Activated naive CD4-positive, alpha-beta T cell treated with anti-CD3 and anti-CD28 coated beads for 36 hours (primary cell): ENCODE measurements at regions of chr11 and their contacts with region 1.

Region 1: DNA sequence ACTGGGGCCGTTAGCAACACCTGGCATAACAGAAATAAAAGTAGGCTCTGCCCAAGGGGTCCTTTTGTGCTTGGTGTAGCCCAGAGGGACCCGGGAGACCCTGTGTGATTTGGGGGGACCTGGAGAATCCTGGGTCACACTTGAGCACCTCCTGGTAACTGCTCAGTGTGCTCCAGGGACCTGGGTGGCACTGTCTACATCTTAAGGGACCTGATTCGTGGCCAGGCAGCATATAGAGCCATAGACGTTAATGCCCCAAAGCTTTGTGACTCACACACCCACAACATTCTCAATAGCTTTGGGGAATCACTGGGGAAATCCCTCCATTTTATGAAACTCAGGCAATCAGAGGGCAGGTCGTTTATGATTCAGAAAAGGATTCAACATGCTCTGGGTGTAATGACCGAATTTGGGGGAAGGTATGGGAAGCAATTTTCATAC is 3.6 kb upstream of the IGF2 start:
- DNase-seq: peak; percentile 75
- H3K4me3 Mint-ChIP-seq: peak overlapping the region; percentile 49
- H3K27ac Mint-ChIP-seq: peak overlapping the region; percentile 63
- H3K4me1 Mint-ChIP-seq: peaks cover 34% of the 10 kb centered on the region
- H3K27me3 Mint-ChIP-seq: peaks cover 56% of the 10 kb centered on the region

Region 2: DNA sequence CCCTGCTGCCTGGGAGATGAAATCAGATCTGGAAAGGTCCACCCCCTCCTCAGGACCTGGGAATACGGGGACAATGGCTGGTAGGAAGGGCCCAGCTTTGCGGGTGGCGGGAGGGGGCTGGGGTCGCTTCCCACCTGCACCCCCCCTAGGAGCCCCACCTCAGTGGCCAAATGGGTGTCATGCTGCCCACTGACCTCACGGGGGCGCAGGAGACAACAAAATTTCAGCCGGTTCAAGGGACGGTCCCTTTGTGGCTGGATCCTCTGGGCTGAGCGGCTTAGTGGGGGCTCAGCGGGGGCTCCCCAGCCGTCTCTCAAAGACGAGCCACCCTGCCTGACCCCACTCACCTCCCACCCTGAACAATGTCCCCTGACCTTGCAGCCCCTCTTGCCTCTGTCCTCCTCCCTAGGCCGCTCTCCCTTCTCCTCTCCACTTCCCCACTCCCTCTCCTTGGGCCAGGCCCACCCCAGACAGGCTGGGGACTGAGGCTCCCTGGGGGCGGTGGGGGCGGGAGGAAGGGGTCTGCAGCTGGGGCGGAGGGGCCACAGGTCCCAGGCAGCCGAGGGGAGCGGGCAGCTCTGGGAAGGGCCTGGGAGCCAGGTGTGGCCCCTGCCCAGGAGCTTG is 105.8 kb before region 1 on chr11:
- CTCF ChIA-PET with region 1: interaction called, 370 read pairs
- intact Hi-C with region 1: no loop called
- DNase-seq: no peak
- H3K4me3 Mint-ChIP-seq: no peak overlapping the region
- H3K27ac Mint-ChIP-seq: no peak overlapping the region
- H3K4me1 Mint-ChIP-seq: no peaks in the 10 kb centered on the region
- H3K27me3 Mint-ChIP-seq: no peaks in the 10 kb centered on the region

Region 3: DNA sequence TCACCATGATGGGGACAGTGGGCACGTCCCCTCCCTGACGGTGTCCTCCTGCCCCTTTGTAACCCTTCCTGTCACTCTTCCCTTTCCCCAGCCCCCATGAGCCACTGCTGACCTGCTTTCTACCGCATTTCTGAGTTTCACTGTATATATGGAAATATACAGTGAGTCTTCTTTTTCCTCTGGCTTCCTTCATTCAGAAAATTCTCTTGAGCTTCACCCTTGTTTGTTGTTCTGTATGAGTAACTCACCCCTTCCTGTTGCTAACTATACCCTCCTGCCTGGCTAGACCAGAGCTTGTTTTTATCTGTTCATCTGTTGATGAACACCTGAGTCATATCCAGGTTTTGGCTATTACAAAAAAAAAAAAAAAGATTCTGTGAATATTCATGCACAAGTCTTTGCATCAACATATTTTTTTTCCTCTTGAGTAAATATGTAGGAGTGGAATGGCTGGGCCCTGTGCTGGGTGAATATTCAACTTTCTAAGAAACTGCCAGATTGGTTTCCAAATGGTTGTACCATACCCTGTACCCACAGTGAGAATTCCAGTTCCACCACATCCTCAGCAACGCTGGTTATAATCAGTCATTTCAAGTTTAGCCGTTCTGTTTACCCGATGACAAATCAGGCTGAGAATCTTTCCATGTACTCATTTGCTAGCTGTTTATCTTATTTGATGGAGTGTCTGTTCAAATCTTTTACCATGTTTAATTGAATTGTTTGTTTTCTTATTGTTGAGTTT is 65.5 kb before region 1 on chr11:
- CTCF ChIA-PET with region 1: no interaction called
- intact Hi-C with region 1: loop called (anchors 1 kb)
- DNase-seq: peak; percentile 67
- H3K4me3 Mint-ChIP-seq: no peak overlapping the region
- H3K27ac Mint-ChIP-seq: peak overlapping the region; percentile 55
- H3K4me1 Mint-ChIP-seq: peaks cover 15% of the 10 kb centered on the region
- H3K27me3 Mint-ChIP-seq: peaks cover 1% of the 10 kb centered on the region

Region 4: DNA sequence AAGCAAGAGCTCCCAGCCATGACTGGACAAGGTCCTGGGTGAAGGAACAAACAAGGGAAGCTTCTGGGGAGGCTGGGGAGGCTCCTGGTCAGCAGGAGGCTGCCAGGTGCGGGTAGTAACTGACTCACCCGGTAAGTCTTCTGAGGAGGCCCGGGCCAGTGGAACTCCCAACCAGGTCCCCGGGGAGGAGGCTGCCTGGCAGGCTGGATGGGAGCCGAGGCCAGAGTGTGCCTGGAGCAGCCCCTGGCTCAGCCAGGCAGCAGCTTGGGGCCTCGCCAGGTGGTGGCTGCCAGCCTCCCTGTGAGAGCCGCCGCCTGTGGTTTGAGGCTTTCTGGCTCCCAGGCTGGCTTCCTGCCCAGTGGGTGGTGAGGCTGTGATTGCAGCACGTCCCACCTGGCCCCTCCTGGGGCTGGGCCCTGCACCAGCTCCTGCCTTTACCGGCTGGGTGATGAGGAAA is 49.8 kb before region 1 on chr11:
- CTCF ChIA-PET with region 1: no interaction called
- intact Hi-C with region 1: loop called (anchors 5 kb)
- DNase-seq: peak; percentile 68
- H3K4me3 Mint-ChIP-seq: no peak overlapping the region
- H3K27ac Mint-ChIP-seq: no peak overlapping the region
- H3K4me1 Mint-ChIP-seq: peaks cover 9% of the 10 kb centered on the region
- H3K27me3 Mint-ChIP-seq: no peaks in the 10 kb centered on the region

Region 5: GRCh38 chr11:2269601-2270321 is 127.0 kb after region 1 on chr11:
- CTCF ChIA-PET with region 1: no interaction called
- intact Hi-C with region 1: loop called (anchors 5 kb)
- DNase-seq: peak; percentile 51
- H3K4me3 Mint-ChIP-seq: peak overlapping the region; percentile 36
- H3K27ac Mint-ChIP-seq: no peak overlapping the region
- H3K4me1 Mint-ChIP-seq: peaks cover 25% of the 10 kb centered on the region
- H3K27me3 Mint-ChIP-seq: peaks cover 25% of the 10 kb centered on the region

Region 6: GRCh38 chr11:2462908-2463765 is 320.4 kb after region 1 on chr11:
- CTCF ChIA-PET with region 1: no interaction called
- intact Hi-C with region 1: no loop called
- DNase-seq: no peak
- H3K4me3 Mint-ChIP-seq: no peak overlapping the region
- H3K27ac Mint-ChIP-seq: no peak overlapping the region
- H3K4me1 Mint-ChIP-seq: peaks cover 58% of the 10 kb centered on the region
- H3K27me3 Mint-ChIP-seq: no peaks in the 10 kb centered on the region